Spleen (tissue), 13 donors: ENCODE measurements at regions of chr15 and their contacts with region 1.

Region 1: GRCh38 chr15:42548253-42549031 is at the starts of genes HAUS2 and LRRC57:
- DNase-seq: peak; percentile 97
- H3K4me3 ChIP-seq: peak within 1 kb of the TSS; percentile 75 to 99 (median 86)
- H3K27ac ChIP-seq: peak within 1 kb of the TSS; percentile 90 to 99 (median 94)
- H3K4me1 ChIP-seq: peaks cover 10 to 86% (median 52%) of the 10 kb centered on the region in 6 donors
- H3K27me3 ChIP-seq: no peaks in the 10 kb centered on the region
- CTCF ChIP-seq: peak in 2 of 11 experiments; percentile 10 to 21
- POLR2A ChIP-seq: peak in 1 of 3 donors; percentile 77
- total RNA-seq, gene HAUS2: 15.3 to 33.7 (median 19.9) TPM
- total RNA-seq, gene LRRC57: 11.5 to 21.4 (median 17.9) TPM

Region 2: DNA sequence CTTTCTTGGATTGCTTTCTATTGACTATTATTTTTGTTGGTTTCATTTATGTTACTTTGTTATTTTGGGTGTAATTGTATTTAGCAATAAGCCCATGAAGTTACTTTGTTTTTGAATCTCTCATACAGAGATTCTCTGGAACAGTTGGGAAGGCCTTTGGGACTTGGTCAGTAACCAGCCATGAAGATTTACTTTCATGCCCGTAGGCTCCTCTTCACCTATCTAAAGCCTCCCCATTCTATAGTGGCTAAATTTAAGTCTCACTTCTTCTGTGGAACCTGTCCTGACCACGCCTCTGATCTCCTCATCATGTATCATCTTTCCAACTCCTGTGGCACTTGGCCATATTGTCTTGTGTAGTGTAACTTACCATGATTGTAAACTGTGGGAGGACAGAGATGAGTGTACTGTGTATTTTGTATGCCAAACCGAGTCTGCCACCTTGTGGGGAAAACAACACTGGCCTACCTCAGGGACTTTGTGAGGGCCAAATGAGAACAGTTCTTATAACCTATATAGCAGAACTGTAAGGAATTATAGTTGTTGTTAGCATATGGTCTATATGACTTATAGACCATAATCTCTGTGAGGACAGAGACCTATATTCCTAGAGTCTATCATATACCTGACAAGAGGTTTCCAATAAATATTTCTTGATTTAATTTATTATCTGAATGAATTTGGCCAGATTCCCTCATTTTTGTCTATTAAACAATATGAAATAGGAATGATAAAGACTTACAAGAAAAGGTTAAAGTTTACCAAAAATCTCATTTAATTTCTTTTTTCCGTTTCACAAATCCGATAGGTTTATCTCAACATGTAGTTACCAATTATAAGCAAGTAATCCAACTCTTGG is 102.0 kb after region 1 on chr15:
- intact Hi-C with region 1: loop called (anchors 5 kb)
- DNase-seq: no peak
- H3K4me3 ChIP-seq: no peak overlapping the region
- H3K27ac ChIP-seq: no peak overlapping the region
- H3K4me1 ChIP-seq: peaks cover 0 to 11% (median 1%) of the 10 kb centered on the region in 6 donors
- H3K27me3 ChIP-seq: no peaks in the 10 kb centered on the region
- CTCF ChIP-seq: peak; percentile 47 to 82 (median 74)
- POLR2A ChIP-seq: no peak